Heart right ventricle (tissue), 16 donors: ENCODE measurements at regions of chr14 and their contacts with region 1.

Region 1: DNA sequence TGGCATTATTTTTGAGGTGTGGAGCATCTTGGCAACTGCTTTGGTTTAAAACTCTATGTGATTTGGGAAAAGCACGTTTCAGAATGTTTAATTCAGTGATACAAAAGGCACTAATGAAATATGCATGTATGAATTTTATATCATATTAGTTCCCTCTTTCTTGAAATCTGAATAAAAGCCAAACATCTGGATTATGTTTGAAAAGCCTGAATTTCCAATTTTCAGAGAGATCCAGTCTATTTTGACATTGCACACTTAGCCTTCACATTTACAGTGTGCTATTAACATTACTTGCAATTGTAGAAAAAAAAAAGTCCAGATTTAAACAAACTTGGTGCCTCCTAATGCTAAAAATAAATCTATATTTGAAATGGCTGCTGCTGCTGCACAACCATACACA is 219.1 kb upstream of the NPAS3 start:
- DNase-seq: no peak
- ATAC-seq: no peak
- H3K4me3 ChIP-seq: no peak overlapping the region
- H3K27ac ChIP-seq: no peak overlapping the region
- H3K4me1 ChIP-seq: peaks cover 0 to 40% (median 20%) of the 10 kb centered on the region in 9 donors
- H3K27me3 ChIP-seq: no peaks in the 10 kb centered on the region
- CTCF ChIP-seq: no peak

Region 2: DNA sequence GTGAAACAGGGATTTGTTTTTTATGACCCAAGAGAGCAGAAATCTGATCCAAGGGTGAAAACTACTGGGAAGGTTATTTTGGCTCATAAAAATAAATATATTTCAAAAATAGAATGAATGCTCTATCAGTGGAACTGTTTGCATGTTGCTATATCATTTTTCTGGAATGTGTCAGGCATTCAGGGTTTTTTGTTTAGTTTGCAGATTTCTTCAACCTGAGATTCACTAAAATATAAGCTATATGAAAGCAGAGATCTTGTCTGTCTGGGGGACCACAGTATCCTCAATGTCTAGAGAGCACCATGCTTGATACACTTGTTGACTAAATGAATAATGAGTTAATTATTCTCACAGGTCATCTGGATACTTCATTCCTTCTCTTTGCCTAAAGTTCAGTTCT is 993.3 kb before region 1 on chr14:
- intact Hi-C with region 1: no loop called
- DNase-seq: no peak
- ATAC-seq: no peak
- H3K4me3 ChIP-seq: no peak overlapping the region
- H3K27ac ChIP-seq: no peak overlapping the region
- H3K4me1 ChIP-seq: no peaks in the 10 kb centered on the region
- H3K27me3 ChIP-seq: no peaks in the 10 kb centered on the region
- CTCF ChIP-seq: no peak

Region 3: DNA sequence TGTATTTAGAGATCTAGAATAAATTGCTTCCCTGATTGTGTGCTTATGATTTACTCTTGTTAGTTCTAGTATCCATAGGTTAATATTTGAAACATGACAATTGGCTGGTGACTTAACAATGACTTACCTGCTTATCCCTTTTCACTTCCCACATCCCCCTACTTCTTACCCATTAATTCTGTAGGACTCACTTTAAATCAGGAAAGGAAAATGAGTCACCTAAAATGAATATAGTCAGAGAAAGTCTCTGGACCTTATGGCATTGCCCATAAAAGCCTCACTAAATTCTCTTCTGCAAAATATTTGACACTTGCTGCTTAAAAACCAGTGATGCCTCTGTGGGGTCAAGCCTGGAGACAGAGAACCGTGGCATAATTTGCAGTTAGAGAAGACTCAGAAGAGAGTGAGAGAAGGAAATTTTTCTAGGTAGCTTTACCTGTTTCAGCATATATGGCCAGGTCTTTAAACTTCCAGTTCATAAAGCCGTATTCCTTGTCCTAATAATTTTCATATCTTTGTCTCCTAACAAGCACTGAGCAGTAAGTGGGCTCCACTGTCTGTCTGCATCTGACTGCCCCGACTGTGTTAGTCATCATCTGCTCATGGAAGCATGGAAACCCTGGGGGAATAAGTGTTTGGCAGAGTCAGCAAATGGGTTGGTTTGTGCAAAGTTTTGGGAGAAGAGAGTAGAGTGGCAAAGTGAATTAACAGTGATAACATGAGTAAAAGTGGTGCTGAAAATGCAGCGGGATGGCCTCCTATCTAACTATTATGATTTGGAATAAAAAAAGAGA is 96.1 kb before region 1 on chr14:
- intact Hi-C with region 1: no loop called
- DNase-seq: no peak
- ATAC-seq: peak in 1 of 8 donors; percentile 35
- H3K4me3 ChIP-seq: no peak overlapping the region
- H3K27ac ChIP-seq: peak overlapping the region in 1 of 10 donors; percentile 44
- H3K4me1 ChIP-seq: peaks cover 0 to 64% (median 15%) of the 10 kb centered on the region in 9 donors
- H3K27me3 ChIP-seq: no peaks in the 10 kb centered on the region
- CTCF ChIP-seq: no peak

Region 4: DNA sequence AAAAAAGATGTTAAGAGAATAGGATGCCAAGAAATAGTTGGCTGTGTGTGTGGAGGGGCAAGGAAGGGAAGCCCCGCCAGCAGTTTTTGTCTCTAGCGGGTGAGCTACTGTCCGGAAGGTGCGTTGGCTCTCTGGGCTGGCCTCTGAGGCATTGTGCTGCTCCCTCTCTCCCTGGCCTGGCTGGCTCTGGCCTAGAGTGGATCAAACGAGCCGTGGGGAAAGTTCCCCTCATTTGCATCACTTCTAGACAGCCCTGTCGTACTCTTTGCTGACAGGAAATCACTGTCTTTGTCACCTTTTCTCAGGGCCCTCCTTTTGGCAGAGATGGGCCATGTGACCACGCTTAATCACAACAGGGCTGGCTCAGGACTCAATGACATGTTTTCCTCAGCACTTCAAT is 17.0 kb before region 1 on chr14:
- intact Hi-C with region 1: no loop called
- DNase-seq: peak; percentile 26 to 38
- ATAC-seq: peak; percentile 82 to 96 (median 84)
- H3K4me3 ChIP-seq: peak overlapping the region in 1 of 10 donors; percentile 6
- H3K27ac ChIP-seq: peak overlapping the region; percentile 56 to 87 (median 74)
- H3K4me1 ChIP-seq: peaks cover 9 to 38% (median 31%) of the 10 kb centered on the region in 9 donors
- H3K27me3 ChIP-seq: no peaks in the 10 kb centered on the region
- CTCF ChIP-seq: no peak

Region 5: GRCh38 chr14:32820181-32820580 is 100.6 kb after region 1 on chr14:
- intact Hi-C with region 1: loop called in 2 of 10 experiments (anchors 5 to 10 kb)
- DNase-seq: peak in 1 of 2 donors; percentile 29
- ATAC-seq: peak; percentile 68 to 83 (median 80)
- H3K4me3 ChIP-seq: no peak overlapping the region
- H3K27ac ChIP-seq: peak overlapping the region in 9 of 10 donors; percentile 26 to 90 (median 76)
- H3K4me1 ChIP-seq: peaks cover 0 to 71% (median 25%) of the 10 kb centered on the region in 9 donors
- H3K27me3 ChIP-seq: no peaks in the 10 kb centered on the region
- CTCF ChIP-seq: no peak